Testis (tissue), 5 donors: ENCODE measurements at regions of chr1 and their contacts with region 1.

Region 1: DNA sequence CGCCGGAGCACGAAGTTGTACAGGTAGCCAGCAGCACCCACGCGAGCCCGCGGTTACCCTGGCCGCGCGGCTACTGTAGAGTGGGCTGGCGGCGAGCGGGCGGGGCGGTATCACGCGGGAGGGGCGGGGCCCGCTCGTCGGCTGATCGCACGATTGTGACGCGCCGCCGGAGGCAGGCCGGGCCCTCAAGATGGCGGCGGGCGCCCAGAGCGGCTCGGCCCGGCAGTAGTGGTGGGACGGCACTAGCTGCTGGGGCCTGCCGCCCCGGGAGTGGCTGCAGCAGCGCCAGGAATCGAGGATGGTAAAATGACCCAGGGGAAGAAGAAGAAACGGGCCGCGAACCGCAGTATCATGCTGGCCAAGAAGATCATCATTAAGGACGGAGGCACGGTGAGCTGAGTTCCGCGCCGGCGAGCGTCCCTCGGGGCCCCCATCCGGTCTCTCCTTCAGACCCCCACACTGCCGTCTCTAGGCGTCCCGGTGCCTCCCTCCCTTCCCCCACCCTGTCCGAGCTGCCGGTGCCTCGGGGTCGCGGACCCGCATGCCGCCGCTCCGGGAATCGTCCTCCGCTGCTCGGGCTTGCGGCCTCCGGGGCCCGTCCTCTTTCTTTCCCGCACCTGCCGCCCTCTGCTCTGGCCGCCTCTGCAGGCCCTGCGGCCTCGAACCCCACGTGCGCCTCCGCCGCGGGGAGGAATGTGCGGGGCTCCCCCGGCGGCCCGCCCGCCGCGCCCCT is 68.3 kb downstream of the SLC35A3 start:
- DNase-seq: peak; percentile 94
- H3K4me3 ChIP-seq: peak overlapping the region; percentile 92 to 96
- H3K27ac ChIP-seq: peak overlapping the region; percentile 98 to 99
- H3K4me1 ChIP-seq: peaks cover 8% of the 10 kb centered on the region
- H3K27me3 ChIP-seq: no peaks in the 10 kb centered on the region
- CTCF ChIP-seq: no peak
- POLR2A ChIP-seq: peak; percentile 85

Region 2: GRCh38 chr1:99110140-99111041 is 927.7 kb before region 1 on chr1:
- intact Hi-C with region 1: no loop called
- DNase-seq: no peak
- H3K4me3 ChIP-seq: no peak overlapping the region
- H3K27ac ChIP-seq: no peak overlapping the region
- H3K4me1 ChIP-seq: no peaks in the 10 kb centered on the region
- H3K27me3 ChIP-seq: no peaks in the 10 kb centered on the region
- CTCF ChIP-seq: no peak
- POLR2A ChIP-seq: no peak

Region 3: DNA sequence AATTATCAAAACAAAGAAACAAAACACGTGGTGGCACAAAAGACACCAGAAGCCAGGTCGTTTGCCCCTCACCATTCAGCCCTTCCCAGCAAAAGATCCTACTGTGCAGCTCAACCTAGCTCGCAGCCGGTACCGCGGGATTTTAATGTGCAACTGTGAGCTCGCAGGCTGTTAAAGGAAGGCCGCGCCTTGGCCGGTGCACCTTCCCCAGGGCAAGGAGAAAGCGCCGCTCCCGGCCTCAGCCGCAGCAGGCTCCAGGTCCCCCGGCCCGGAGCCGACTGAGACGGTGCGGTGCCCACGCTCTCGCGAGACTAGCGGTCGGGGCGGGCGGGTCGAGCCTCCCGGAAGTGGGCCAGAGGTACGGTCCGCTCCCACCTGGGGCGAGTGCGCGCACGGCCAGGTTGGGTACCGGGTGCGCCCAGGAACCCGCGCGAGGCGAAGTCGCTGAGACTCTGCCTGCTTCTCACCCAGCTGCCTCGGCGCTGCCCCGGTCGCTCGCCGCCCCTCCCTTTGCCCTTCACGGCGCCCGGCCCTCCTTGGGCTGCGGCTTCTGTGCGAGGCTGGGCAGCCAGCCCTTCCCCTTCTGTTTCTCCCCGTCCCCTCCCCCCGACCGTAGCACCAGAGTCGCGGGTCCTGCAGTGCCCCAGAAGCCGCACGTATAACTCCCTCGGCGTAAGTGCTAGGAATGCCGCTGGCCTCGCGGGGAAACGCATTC is 188.2 kb before region 1 on chr1 and contains the start of gene AGL:
- intact Hi-C with region 1: no loop called
- DNase-seq: peak; percentile 90
- H3K4me3 ChIP-seq: peak within 1 kb of the TSS; percentile 91 to 97
- H3K27ac ChIP-seq: peak within 1 kb of the TSS; percentile 80 to 86
- H3K4me1 ChIP-seq: no peaks in the 10 kb centered on the region
- H3K27me3 ChIP-seq: no peaks in the 10 kb centered on the region
- CTCF ChIP-seq: peak in 1 of 3 experiments; percentile 3
- POLR2A ChIP-seq: no peak
- total RNA-seq, gene AGL: 16.7 to 19.6 TPM

Region 4: GRCh38 chr1:99994496-99994895 is 43.6 kb before region 1 on chr1:
- intact Hi-C with region 1: no loop called
- DNase-seq: no peak
- H3K4me3 ChIP-seq: no peak overlapping the region
- H3K27ac ChIP-seq: no peak overlapping the region
- H3K4me1 ChIP-seq: no peaks in the 10 kb centered on the region
- H3K27me3 ChIP-seq: no peaks in the 10 kb centered on the region
- CTCF ChIP-seq: no peak
- POLR2A ChIP-seq: no peak

Region 5: DNA sequence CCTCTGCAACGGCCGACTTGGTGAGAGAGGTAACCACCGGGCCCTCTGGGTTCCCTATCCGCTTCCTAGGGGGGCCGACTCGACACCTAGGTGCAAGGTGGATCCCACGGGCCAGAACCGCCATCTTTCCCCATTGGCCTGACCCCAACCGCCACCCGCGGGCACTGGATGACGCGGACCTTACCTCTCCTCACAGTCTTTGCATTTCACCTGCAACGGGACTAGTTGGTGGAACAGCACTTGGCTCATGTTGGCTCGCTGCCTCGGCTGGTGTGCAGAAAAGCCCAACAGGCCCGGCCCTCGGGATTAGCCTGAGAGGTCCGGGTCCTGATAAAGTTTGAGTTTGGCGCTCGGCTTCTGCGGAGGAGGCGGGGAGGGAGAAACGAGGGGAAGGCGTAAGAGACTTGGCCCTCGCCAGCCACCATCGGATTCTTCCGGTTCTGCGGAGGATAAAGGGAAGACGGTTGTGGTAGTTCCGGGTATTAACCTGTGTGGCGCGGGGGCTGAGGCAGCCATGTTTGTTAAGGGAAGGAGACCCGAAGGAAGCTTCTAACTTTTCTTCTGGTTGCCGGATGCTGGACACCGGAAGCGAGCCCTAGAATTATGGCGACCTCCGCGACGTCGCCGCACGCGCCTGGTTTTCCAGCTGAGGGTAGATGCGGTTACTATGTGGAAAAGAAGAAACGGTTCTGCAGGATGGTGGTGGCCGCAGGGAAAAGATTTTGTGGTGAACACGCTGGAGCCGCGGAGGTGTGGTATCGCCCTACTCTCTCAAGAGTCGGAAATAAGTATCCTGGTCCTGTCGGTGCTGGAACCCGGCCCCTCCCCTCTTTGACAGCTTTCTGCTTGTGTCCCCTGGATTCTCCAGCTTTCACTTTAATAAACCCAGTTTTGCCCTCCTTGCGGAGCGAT is 94.7 kb after region 1 on chr1 and contains the starts of genes SASS6 and TRMT13:
- intact Hi-C with region 1: loop called (anchors 5 kb)
- DNase-seq: peak; percentile 98
- H3K4me3 ChIP-seq: peak within 1 kb of the TSS; percentile 83 to 86
- H3K27ac ChIP-seq: peak within 1 kb of the TSS; percentile 79 to 81
- H3K4me1 ChIP-seq: peaks cover 9% of the 10 kb centered on the region
- H3K27me3 ChIP-seq: no peaks in the 10 kb centered on the region
- CTCF ChIP-seq: peak in 1 of 3 experiments; percentile 29
- POLR2A ChIP-seq: no peak
- total RNA-seq, gene SASS6: 9.5 to 13.4 TPM
- total RNA-seq, gene TRMT13: 14.7 to 19.8 TPM